Activated CD4-positive, alpha-beta T cell treated with anti-CD3 and anti-CD28 coated beads, Interleukin-2, amount 10 ng/mL, durations not matched to agents 7 days and 5 days (primary cell): ENCODE measurements at regions of chr16 and their contacts with region 1.

Region 1: GRCh38 chr16:68328151-68328859 is 17.5 kb downstream of the PRMT7 start:
- DNase-seq: peak; percentile 85
- H3K4me3 Mint-ChIP-seq: no peak overlapping the region
- H3K27ac Mint-ChIP-seq: no peak overlapping the region
- H3K4me1 Mint-ChIP-seq: peaks cover 29% of the 10 kb centered on the region
- H3K27me3 Mint-ChIP-seq: no peaks in the 10 kb centered on the region

Region 2: DNA sequence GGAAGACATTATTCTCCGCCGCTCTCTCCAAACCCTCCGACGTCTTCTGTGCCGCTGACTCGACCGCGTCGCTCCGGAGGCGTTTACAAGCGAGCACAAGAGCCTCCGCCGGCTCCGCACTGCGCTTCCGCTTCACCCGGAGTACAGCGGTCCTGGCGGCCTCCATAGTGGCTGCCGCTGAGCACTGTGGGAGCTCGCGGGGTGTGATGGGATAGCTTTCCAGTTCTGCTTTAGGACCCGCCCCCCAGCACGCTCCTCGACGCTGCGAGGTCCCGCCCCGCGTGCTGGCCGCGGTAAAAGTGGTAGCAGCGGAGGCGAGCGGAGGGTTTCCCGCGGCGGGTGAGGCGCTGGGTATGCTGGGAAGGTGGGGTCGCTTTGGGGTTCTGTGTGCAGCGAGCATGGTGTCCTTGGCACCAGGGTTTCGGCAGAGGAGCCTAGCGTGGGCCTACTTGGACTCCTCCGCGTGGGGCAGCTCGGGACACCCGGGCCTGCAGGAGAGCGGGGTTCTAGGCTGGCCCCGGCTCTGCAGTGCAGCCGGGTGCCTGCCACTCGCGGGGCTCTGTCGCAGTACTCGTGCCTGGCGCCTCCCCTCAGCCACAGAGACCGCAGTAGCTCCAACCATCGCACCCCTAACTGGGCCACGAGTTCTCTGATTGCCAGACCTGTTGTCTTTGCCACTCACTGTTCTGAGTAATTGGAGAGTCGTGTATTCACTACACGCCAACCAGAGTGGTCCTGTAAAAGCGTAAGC is 17.4 kb before region 1 on chr16 and contains the starts of genes PRMT7 and SLC7A6OS:
- CTCF ChIA-PET with region 1: interaction called, 12 read pairs
- POLR2A ChIA-PET with region 1: no interaction called
- DNase-seq: peak; percentile 95
- H3K4me3 Mint-ChIP-seq: peak within 1 kb of the TSS; percentile 93
- H3K27ac Mint-ChIP-seq: peak within 1 kb of the TSS; percentile 95
- H3K4me1 Mint-ChIP-seq: peaks cover 50% of the 10 kb centered on the region
- H3K27me3 Mint-ChIP-seq: no peaks in the 10 kb centered on the region
- total RNA-seq, gene PRMT7: 76.9 TPM
- total RNA-seq, gene SLC7A6OS: 25.9 to 28.6 TPM

Region 3: GRCh38 chr16:68338326-68339119 is 10.2 kb after region 1 on chr16:
- CTCF ChIA-PET with region 1: interaction called, 23 read pairs
- POLR2A ChIA-PET with region 1: interaction called, 3 read pairs
- DNase-seq: no peak
- H3K4me3 Mint-ChIP-seq: no peak overlapping the region
- H3K27ac Mint-ChIP-seq: peak overlapping the region; percentile 32
- H3K4me1 Mint-ChIP-seq: peaks cover 6% of the 10 kb centered on the region
- H3K27me3 Mint-ChIP-seq: no peaks in the 10 kb centered on the region